Prostate gland (tissue), 2 donors: ENCODE measurements at regions of chr2 and their contacts with region 1.

Region 1: GRCh38 chr2:120469426-120469825 is 123.5 kb downstream of the INHBB start:
- DNase-seq: no peak
- H3K4me3 ChIP-seq: no peak overlapping the region
- H3K27ac ChIP-seq: peak overlapping the region; percentile 84 to 87
- H3K4me1 ChIP-seq: peaks cover 13% of the 10 kb centered on the region
- H3K27me3 ChIP-seq: no peaks in the 10 kb centered on the region
- CTCF ChIP-seq: no peak
- POLR2A ChIP-seq: no peak

Region 2: DNA sequence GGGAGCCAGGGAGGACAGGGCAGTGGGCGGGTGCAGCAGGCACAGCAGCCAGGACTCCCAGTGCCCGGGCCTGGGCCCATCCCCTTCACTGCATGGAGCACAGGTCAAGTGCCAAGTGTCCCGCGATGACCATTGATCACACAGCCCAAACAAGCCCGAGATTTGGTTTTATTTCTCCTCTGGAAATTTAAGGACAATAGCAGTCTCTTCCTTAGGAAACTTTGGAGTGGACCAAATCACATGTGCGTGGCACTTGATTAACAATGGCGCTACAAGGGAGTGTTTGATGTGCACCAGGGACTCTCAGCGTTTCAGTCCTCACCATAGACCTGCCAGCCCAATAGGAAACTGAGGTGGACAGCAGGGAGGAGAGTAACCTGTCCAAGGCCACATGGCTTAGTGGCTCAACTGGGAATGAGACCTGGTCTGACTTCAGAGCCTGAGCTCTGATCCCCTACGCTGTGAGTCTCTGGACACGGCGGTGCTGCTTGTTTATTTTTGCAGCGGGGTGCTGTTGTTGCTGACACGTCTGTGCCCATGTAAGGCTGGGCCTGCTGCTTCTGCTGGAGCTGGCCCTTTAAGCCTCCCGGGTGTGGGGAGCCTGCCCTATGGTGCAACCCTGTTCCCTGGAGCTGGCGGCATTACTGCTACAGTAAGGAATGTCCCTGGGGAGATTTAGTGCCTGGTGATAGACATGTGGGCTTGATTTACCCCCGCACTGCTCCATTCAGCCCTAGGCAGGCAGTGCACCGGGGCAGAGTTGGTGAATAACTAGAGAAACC is 70.7 kb after region 1 on chr2:
- intact Hi-C with region 1: loop called (anchors 2 kb)
- DNase-seq: no peak
- H3K4me3 ChIP-seq: no peak overlapping the region
- H3K27ac ChIP-seq: peak overlapping the region; percentile 4 to 34
- H3K4me1 ChIP-seq: no peaks in the 10 kb centered on the region
- H3K27me3 ChIP-seq: no peaks in the 10 kb centered on the region
- CTCF ChIP-seq: no peak
- POLR2A ChIP-seq: no peak